H1 (cell line): ENCODE measurements at regions of chr3 and their contacts with region 1.

Region 1: DNA sequence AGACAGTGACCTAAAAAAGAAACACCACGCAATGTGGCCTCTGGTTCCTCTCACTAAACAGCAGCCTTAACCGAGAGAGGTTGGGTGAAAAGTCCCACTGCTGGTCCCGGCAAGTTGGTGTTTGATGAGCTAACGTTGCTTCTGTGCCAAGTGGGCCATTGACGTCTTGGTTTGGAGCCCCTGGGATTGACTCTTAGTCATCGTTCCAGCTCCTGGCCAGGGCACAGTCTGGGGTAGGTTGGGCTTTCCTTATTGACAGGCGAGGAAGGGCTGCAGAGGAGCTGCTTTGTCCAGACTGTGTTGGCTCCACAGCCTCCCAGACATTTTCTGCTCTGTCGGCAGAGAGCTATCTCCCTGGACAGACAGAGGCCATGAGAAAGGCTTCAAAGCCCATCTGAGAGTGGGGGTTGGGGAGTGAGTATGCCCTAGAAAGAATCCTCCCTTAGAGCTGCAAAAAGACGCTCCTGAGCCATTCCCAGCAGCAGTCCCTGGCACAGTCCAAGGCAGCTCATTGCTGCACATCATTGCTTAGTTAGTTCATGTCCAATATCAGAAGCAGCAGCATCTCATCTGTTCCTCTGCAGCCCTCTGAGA is 28.6 kb upstream of the C3orf80 start:
- DNase-seq: no peak
- H3K4me3 ChIP-seq: no peak overlapping the region
- H3K27ac ChIP-seq: no peak overlapping the region
- H3K4me1 ChIP-seq: no peaks in the 10 kb centered on the region
- H3K27me3 ChIP-seq: no peaks in the 10 kb centered on the region
- CTCF ChIP-seq: no peak
- EP300 ChIP-seq: no peak
- POLR2A ChIP-seq: no peak
- RAD21 ChIP-seq: no peak

Region 2: GRCh38 chr3:160184655-160185054 is 12.0 kb before region 1 on chr3:
- CTCF ChIA-PET with region 1: interaction called, 12 read pairs
- POLR2A ChIA-PET with region 1: no interaction called
- DNase-seq: no peak
- H3K4me3 ChIP-seq: no peak overlapping the region
- H3K27ac ChIP-seq: no peak overlapping the region
- H3K4me1 ChIP-seq: no peaks in the 10 kb centered on the region
- H3K27me3 ChIP-seq: no peaks in the 10 kb centered on the region
- CTCF ChIP-seq: no peak
- EP300 ChIP-seq: no peak
- POLR2A ChIP-seq: no peak
- RAD21 ChIP-seq: no peak

Region 3: DNA sequence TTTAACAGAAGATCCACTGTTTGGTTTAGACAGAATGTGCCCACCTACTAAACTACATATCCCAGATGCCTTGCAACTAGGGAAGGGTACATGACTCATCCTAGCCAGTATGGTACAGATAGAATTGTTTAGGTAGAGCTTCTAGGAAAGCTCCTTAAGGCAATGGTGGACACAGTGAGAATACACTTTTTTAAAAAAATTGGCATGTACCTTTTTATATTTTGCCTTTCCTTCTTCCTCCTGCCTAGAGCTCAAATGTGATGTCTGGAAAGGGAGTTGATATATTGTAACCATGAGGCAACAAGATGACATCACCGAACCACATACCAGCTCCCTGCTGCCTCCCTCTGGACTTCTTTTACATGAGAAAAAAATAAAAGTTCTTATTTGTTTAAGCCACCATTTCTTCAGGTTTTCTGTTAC is 14.2 kb after region 1 on chr3:
- CTCF ChIA-PET with region 1: interaction called, 10 read pairs
- POLR2A ChIA-PET with region 1: interaction called, 3 read pairs
- DNase-seq: no peak
- H3K4me3 ChIP-seq: no peak overlapping the region
- H3K27ac ChIP-seq: no peak overlapping the region
- H3K4me1 ChIP-seq: no peaks in the 10 kb centered on the region
- H3K27me3 ChIP-seq: no peaks in the 10 kb centered on the region
- CTCF ChIP-seq: peak in 2 of 3 experiments; percentile 17 to 19; a peak in 1 of 4 replicates
- EP300 ChIP-seq: no peak
- POLR2A ChIP-seq: no peak
- RAD21 ChIP-seq: peak; percentile 38 to 40

Region 4: DNA sequence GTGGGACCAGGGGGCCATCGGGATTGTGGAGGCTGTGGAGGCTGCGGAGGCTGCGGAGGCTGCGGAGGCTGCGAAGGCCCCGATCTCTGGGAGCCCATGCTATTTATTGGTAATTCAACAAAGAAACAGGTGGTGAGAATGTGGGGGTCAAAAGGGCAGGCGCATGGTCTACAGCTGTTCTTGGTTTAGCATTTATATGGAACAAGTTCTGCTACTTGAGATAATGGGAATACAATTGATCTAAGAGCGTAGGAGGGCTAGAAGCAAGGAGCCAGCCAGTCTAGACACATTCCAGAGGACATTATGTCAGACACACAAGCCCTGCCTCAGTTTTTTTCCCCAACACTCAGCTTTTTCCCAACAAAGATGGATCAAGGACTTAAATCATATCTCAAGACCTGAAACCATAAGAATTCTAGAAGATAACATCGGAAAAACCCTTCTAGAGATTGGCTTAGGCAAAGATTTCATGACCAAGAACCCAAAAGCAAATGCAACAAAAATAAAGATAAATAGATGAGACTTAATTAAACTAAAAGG is 48.7 kb after region 1 on chr3:
- CTCF ChIA-PET with region 1: no interaction called
- POLR2A ChIA-PET with region 1: no interaction called
- DNase-seq: no peak
- H3K4me3 ChIP-seq: no peak overlapping the region
- H3K27ac ChIP-seq: no peak overlapping the region
- H3K4me1 ChIP-seq: no peaks in the 10 kb centered on the region
- H3K27me3 ChIP-seq: no peaks in the 10 kb centered on the region
- CTCF ChIP-seq: no peak
- EP300 ChIP-seq: no peak
- POLR2A ChIP-seq: no peak
- RAD21 ChIP-seq: no peak

Region 5: GRCh38 chr3:160365869-160366522 is 169.4 kb after region 1 on chr3:
- CTCF ChIA-PET with region 1: no interaction called
- POLR2A ChIA-PET with region 1: no interaction called
- DNase-seq: no peak
- H3K4me3 ChIP-seq: no peak overlapping the region
- H3K27ac ChIP-seq: no peak overlapping the region
- H3K4me1 ChIP-seq: no peaks in the 10 kb centered on the region
- H3K27me3 ChIP-seq: no peaks in the 10 kb centered on the region
- CTCF ChIP-seq: no peak
- EP300 ChIP-seq: no peak
- POLR2A ChIP-seq: no peak
- RAD21 ChIP-seq: no peak